ENCODE measurements at regions of chr2 and their contacts with region 1.

Region 1: GRCh38 chr2:241355983-241356870 is at the start of gene FARP2:
- DNase-seq: peak; percentile 100
- H3K4me3 ChIP-seq: peak within 1 kb of the TSS; percentile 85 to 91
- H3K27ac ChIP-seq: peak within 1 kb of the TSS; percentile 86 to 88
- H3K4me1 ChIP-seq: peaks cover 9% of the 10 kb centered on the region
- H3K27me3 ChIP-seq: no peaks in the 10 kb centered on the region
- CTCF ChIP-seq: no peak
- POLR2A ChIP-seq: peak; percentile 90
- total RNA-seq, gene FARP2: 32.4 to 35.9 TPM

Region 2: GRCh38 chr2:240714747-240715725 is 641.2 kb before region 1 on chr2:
- intact Hi-C with region 1: no loop called
- DNase-seq: no peak
- H3K4me3 ChIP-seq: no peak overlapping the region
- H3K27ac ChIP-seq: no peak overlapping the region
- H3K4me1 ChIP-seq: no peaks in the 10 kb centered on the region
- H3K27me3 ChIP-seq: no peaks in the 10 kb centered on the region
- CTCF ChIP-seq: no peak
- POLR2A ChIP-seq: no peak

Region 3: GRCh38 chr2:241271641-241272297 is 84.5 kb before region 1 on chr2:
- intact Hi-C with region 1: loop called (anchors 5 kb)
- DNase-seq: peak; percentile 88
- H3K4me3 ChIP-seq: peak overlapping the region; percentile 94 to 100
- H3K27ac ChIP-seq: peak overlapping the region; percentile 93 to 99
- H3K4me1 ChIP-seq: peaks cover 9% of the 10 kb centered on the region
- H3K27me3 ChIP-seq: no peaks in the 10 kb centered on the region
- CTCF ChIP-seq: no peak
- POLR2A ChIP-seq: peak; percentile 78

Region 4: GRCh38 chr2:241315093-241315878 is 40.9 kb before region 1 on chr2 and contains the start of gene HDLBP:
- intact Hi-C with region 1: loop called (anchors 1 kb)
- DNase-seq: peak; percentile 99
- H3K4me3 ChIP-seq: peak within 1 kb of the TSS; percentile 88 to 92
- H3K27ac ChIP-seq: peak within 1 kb of the TSS; percentile 98
- H3K4me1 ChIP-seq: peaks cover 3% of the 10 kb centered on the region
- H3K27me3 ChIP-seq: no peaks in the 10 kb centered on the region
- CTCF ChIP-seq: peak in 2 of 4 experiments; percentile 18 to 34
- POLR2A ChIP-seq: peak; percentile 90
- total RNA-seq, gene HDLBP: 529 to 612 TPM

Region 5: GRCh38 chr2:241412144-241412543 is 55.9 kb after region 1 on chr2:
- intact Hi-C with region 1: no loop called
- DNase-seq: peak; percentile 12
- H3K4me3 ChIP-seq: no peak overlapping the region
- H3K27ac ChIP-seq: no peak overlapping the region
- H3K4me1 ChIP-seq: no peaks in the 10 kb centered on the region
- H3K27me3 ChIP-seq: no peaks in the 10 kb centered on the region
- CTCF ChIP-seq: no peak
- POLR2A ChIP-seq: peak; percentile 46

Region 6: GRCh38 chr2:241479026-241479898 is 123.0 kb after region 1 on chr2:
- intact Hi-C with region 1: no loop called
- DNase-seq: no peak
- H3K4me3 ChIP-seq: no peak overlapping the region
- H3K27ac ChIP-seq: no peak overlapping the region
- H3K4me1 ChIP-seq: no peaks in the 10 kb centered on the region
- H3K27me3 ChIP-seq: no peaks in the 10 kb centered on the region
- CTCF ChIP-seq: no peak
- POLR2A ChIP-seq: no peak

Region 7: DNA sequence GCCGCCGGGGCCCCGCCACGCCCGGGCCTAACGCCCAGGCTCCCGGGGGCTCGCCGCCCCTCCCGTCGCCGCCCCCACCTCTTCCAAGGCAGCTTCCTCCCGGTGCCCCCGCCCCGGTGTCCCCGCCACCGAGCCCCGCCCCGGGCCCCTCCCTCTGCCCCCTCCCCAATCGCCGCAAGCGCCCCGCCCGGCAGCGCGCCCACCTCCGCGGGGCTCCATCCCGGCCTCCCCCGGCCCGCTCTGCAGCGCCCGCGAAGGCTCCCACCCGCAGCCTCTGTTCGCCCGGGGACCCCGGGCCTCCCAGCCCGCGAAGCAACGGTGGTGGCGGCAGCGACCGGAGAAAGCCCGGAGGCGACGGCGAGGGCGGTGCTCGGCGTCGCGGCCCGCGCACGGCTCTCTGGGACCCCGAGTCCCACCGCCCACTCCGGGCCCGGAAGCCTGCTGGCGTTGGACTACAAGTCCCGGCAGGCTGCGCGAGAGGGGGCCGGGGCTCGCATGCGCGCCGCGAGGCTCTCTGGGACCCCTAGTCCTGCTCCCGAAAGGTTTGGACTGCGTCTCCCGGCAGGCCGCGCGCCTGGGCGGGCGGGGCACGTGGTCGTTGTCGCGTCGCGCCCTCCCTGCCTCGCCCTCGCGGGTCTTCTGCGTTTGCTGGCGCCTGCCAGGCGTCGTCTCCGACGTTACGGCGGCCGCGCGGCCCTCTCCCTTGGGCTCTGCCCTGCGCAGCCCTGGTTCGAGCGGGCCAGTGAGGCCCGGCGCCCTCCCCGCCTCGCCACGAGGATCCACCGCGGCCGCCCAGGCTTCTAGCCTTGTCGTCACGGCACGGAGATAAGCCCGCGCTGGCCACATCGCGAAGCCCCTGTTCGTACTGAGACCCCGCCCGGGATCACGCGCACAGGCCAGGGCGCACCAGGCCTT is 152.3 kb after region 1 on chr2 and contains the start of gene STK25:
- intact Hi-C with region 1: loop called (anchors 10 kb)
- DNase-seq: peak; percentile 97
- H3K4me3 ChIP-seq: peak within 1 kb of the TSS; percentile 96
- H3K27ac ChIP-seq: peak within 1 kb of the TSS; percentile 85 to 91
- H3K4me1 ChIP-seq: peaks cover 4% of the 10 kb centered on the region
- H3K27me3 ChIP-seq: no peaks in the 10 kb centered on the region
- CTCF ChIP-seq: peak in 2 of 4 experiments; percentile 3 to 7
- POLR2A ChIP-seq: peak; percentile 78
- total RNA-seq, gene STK25: 169 to 235 TPM

Region 8: DNA sequence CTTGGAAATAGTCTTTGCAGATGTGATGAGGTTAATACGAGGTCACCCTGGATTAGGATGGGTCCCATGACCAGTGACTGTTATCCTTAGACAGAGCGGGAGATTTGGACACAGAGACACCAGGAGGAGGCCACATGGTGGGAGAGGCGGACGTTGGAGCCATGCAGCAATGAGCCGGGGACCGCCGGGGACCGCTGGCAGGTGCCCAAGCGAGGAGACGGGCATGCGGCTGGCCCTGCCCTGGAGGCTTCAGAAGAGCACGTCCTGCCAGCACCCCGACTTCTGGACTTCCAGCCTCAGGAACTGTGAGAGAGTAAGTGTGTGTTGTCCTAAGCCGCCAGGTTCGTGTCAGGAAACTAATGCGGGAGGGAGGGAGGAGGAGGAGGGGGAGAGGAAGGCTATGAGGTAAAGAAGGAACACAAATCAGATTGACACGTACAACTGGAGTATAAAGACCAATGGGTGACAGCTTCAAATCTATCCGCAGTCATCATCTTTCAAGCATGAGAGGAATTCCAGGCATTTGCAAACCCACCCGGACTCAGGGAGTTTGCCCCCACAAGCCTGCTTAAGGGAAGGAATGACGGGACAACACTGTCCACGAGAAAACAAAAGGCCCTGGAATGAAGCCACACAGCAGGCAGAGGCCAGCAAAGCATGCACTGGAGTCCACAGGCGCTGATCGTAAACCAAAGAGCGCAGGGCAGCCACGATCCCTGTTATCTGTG is 190.7 kb after region 1 on chr2:
- intact Hi-C with region 1: no loop called
- DNase-seq: no peak
- H3K4me3 ChIP-seq: no peak overlapping the region
- H3K27ac ChIP-seq: no peak overlapping the region
- H3K4me1 ChIP-seq: no peaks in the 10 kb centered on the region
- H3K27me3 ChIP-seq: no peaks in the 10 kb centered on the region
- CTCF ChIP-seq: no peak
- POLR2A ChIP-seq: no peak

Region 9: DNA sequence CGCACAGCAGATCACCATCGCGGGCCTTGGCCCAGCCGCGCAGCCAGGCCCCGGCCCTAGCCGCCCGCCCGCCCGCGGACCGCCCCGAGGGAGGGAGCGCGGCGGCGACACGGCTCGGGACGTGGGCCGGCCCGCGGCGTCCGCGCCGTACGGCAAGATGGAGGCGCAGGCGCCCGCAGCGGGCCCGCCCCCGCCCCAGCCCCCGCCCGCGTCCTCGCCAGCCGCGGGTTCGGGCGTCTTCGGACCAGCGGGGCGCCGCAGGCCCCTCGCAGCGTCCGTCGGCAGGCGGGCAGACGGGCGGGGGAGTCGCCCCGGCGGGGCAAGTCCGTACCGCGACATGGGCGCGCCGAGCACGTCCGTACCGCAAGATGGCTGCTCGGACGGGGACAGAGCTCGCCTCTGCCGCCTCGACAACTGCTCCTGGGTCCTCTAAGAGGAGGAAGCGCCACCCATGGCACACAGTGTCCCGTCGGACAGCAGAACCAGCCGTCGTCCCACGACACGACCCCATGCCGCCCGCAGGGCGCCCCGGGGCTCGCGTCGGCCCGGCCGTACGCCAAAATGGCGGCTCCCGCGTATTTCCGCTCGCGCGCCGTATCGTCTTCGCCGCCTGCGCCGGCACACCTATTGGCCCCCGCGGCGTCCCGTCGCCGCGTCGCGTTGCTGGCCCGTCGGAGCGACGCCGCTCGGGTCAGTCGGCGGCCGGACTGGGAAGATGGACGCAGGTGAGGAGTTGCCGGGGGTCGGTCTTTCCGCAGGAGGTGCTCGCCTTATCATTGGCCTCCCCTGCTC is 281.0 kb after region 1 on chr2 and contains the starts of genes ATG4B and THAP4:
- intact Hi-C with region 1: loop called (anchors 2 kb)
- DNase-seq: peak; percentile 85
- H3K4me3 ChIP-seq: peak within 1 kb of the TSS; percentile 96 to 100
- H3K27ac ChIP-seq: peak within 1 kb of the TSS; percentile 99
- H3K4me1 ChIP-seq: peaks cover 17% of the 10 kb centered on the region
- H3K27me3 ChIP-seq: no peaks in the 10 kb centered on the region
- CTCF ChIP-seq: peak in 1 of 4 experiments; percentile 25
- POLR2A ChIP-seq: peak; percentile 17
- total RNA-seq, gene ATG4B: 63.9 to 162 TPM
- total RNA-seq, gene THAP4: 60.8 to 92.9 TPM

Measured in prostate gland (tissue), 2 donors.